SK-N-SH (cell line): ENCODE measurements at regions of chr5 and their contacts with region 1.

Region 1: DNA sequence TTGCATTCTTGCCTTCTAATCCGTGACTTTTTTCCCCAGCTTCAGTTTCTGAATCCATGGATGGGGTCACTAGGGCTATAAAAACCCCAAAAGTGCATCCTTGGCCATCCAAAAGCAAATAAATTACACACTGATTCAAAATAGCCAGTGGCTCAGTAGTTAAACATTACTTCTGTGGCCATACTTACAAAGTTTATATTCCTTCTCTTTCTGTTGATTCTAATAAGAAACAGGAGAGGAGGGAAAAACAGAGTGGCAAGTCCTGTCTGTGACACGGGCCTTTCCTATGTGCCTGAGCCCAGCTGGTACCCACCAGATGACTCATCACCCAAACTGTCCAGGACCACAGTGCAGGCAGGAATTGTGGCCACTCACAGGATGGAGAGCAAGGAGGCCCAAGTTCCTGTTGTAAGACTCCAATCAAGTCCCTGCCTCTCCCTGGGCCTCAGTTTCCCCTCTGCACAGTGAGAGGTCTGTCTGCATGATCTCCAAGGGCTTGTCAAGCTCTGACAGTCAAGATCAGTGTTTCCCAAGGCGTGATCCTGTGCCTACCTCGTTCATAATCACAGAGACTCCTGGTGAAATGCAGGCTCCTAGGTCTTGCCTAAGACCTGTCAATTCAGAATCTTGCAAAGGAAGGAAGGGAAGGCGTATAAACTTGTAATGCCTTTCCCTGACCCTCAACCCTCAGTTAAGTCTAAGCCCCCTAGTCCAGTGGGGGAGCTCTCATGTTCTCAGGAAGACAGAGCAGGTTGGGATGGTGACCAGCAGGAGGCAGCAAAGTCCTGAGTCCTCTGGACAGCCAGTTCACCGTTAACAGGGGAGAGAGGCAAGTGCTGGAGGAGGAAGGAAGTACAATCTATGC is 29.5 kb downstream of the TNIP1 start:
- DNase-seq: peak; percentile 86
- H3K4me3 ChIP-seq: no peak overlapping the region; a peak in 1 of 4 replicates
- H3K27ac ChIP-seq: no peak overlapping the region
- H3K4me1 ChIP-seq: no peaks in the 10 kb centered on the region
- H3K27me3 ChIP-seq: no peaks in the 10 kb centered on the region
- CTCF ChIP-seq: peak; percentile 92
- EP300 ChIP-seq: no peak
- RAD21 ChIP-seq: peak; percentile 93

Region 2: DNA sequence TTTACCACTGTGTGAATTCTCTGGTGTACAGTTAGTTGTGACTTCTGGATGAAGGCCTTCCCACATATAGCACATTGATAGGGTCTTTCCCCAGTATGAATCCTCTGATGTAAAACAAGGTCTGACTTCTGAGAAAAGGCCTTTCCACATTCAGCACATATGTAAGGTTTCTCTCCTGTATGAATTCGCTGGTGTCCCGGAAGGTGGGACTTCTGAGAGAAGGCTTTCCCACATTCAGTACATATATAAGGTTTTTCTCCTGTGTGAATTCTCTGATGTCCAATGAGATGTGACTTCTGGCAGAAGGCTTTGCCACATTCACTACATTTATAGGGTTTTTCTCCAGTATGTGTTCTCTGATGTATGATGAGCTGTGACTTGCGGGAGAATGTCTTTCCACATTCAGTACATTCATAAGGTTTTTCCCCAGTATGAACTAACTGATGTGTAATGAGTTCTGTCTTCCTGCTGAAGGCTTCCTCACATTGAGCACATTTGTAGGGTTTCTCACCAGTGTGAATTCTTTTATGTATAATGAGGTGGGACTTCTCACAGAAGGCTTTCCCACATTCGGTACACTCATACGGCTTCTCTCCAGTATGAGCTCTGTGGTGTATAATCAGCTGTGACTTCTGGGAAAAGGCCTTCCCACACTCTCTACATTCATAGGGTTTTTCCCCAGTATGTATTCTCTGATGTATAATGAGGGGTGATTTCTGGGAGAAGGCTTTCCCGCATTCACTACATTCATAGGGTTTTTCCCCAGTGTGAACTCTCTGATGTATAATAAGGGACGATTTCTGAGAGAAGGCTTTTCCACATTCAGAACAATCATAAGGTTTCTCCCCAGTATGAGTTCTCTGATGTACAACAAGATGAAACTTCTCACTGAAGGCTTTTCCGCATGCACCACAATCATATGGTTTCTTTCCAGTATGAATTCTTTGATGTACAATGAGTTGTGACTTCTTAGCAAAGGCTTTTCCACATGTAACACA is 155.6 kb before region 1 on chr5:
- CTCF ChIA-PET with region 1: no interaction called
- POLR2A ChIA-PET with region 1: no interaction called
- DNase-seq: no peak
- H3K4me3 ChIP-seq: peak overlapping the region in 1 of 2 experiments; percentile 6; a peak in 1 of 4 replicates
- H3K27ac ChIP-seq: no peak overlapping the region
- H3K4me1 ChIP-seq: no peaks in the 10 kb centered on the region
- H3K27me3 ChIP-seq: no peaks in the 10 kb centered on the region
- CTCF ChIP-seq: no peak
- EP300 ChIP-seq: no peak
- RAD21 ChIP-seq: no peak

Region 3: DNA sequence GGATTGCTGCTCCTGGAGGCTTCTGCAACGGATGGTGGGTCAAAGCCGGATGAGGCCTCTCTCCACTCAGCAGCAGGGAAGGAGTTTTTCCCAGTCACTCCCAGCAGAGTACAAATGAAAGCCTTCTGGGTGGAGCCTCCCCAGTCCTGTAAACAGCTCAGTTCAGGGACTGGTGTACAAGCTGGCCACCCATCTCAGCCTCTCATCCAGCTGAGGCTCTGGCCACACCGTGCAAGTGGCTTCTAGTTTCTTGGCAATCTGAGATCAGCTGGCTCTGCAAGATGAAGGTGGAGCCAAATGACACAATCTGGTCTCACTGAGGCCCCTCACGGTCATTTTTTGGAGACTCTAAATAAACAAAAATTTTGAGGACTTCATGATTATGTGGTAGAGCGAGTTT is 20.9 kb before region 1 on chr5:
- CTCF ChIA-PET with region 1: interaction called, 93 read pairs
- POLR2A ChIA-PET with region 1: interaction called, 3 read pairs
- DNase-seq: no peak
- H3K4me3 ChIP-seq: no peak overlapping the region
- H3K27ac ChIP-seq: no peak overlapping the region
- H3K4me1 ChIP-seq: no peaks in the 10 kb centered on the region
- H3K27me3 ChIP-seq: no peaks in the 10 kb centered on the region
- CTCF ChIP-seq: no peak
- EP300 ChIP-seq: no peak
- RAD21 ChIP-seq: no peak

Region 4: DNA sequence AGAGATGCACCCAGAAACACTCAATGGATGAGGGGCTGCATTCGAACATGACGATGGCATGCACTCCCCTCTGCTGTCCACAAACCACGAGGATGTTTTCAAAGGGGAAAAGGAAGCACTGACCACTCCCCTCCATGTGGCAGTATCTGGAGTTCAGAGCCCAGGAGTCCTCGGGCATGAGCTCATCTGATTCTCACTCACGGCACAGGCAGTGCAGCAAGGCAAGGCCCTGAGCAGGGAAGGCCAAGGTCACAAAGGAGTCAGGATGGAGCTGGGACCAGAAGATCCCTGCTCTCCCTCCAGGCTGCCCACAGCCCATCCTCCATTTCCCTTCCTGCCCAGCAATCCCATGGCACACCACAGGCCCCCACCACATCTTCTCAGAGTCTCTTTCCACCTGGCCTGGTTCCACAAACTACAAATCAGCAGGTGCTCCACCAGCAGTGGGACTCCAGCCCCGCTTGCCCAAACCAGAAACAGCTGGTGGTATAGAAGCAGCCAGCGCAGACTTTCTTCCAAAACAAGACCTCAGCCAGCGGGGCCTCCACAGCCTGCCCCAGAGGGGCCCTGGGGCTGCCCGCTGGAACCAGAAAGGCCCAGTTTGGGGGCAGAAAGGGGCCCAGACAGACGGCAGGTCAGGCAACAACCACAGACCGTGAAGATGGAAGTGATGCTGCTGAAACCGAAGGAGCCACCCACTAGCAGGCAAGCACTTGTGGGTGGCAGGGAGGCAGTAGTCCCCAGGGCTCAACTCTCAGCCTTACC is 17.3 kb after region 1 on chr5:
- CTCF ChIA-PET with region 1: interaction called, 22 read pairs
- POLR2A ChIA-PET with region 1: no interaction called
- DNase-seq: no peak
- H3K4me3 ChIP-seq: no peak overlapping the region
- H3K27ac ChIP-seq: peak overlapping the region in 1 of 2 experiments; percentile 71; a peak in 1 of 4 replicates
- H3K4me1 ChIP-seq: peaks cover 26 to 37% of the 10 kb centered on the region in 2 experiments; a peak in 3 of 4 replicates
- H3K27me3 ChIP-seq: no peaks in the 10 kb centered on the region
- CTCF ChIP-seq: no peak
- EP300 ChIP-seq: no peak
- RAD21 ChIP-seq: no peak

Region 5: GRCh38 chr5:151093476-151093889 is 42.2 kb after region 1 on chr5:
- CTCF ChIA-PET with region 1: interaction called, 17 read pairs
- POLR2A ChIA-PET with region 1: no interaction called
- DNase-seq: no peak
- H3K4me3 ChIP-seq: no peak overlapping the region
- H3K27ac ChIP-seq: peak overlapping the region in 1 of 2 experiments; percentile 69; a peak in 2 of 4 replicates
- H3K4me1 ChIP-seq: peaks cover 12 to 23% of the 10 kb centered on the region in 2 experiments; a peak in 3 of 4 replicates
- H3K27me3 ChIP-seq: no peaks in the 10 kb centered on the region
- CTCF ChIP-seq: no peak
- EP300 ChIP-seq: peak in 1 of 2 experiments; percentile 64; a peak in 1 of 4 replicates
- RAD21 ChIP-seq: no peak

Region 6: GRCh38 chr5:151164686-151165392 is 113.5 kb after region 1 on chr5:
- CTCF ChIA-PET with region 1: interaction called, 96 read pairs
- POLR2A ChIA-PET with region 1: no interaction called
- DNase-seq: peak; percentile 76
- H3K4me3 ChIP-seq: peak overlapping the region in 1 of 2 experiments; percentile 34; a peak in 1 of 4 replicates
- H3K27ac ChIP-seq: no peak overlapping the region
- H3K4me1 ChIP-seq: no peaks in the 10 kb centered on the region
- H3K27me3 ChIP-seq: no peaks in the 10 kb centered on the region; the same call in 1 of the 2 replicates
- CTCF ChIP-seq: peak; percentile 93
- EP300 ChIP-seq: no peak
- RAD21 ChIP-seq: peak; percentile 97